CD4-positive, alpha-beta T cell (primary cell): ENCODE measurements at regions of chr3 and their contacts with region 1.

Region 1: DNA sequence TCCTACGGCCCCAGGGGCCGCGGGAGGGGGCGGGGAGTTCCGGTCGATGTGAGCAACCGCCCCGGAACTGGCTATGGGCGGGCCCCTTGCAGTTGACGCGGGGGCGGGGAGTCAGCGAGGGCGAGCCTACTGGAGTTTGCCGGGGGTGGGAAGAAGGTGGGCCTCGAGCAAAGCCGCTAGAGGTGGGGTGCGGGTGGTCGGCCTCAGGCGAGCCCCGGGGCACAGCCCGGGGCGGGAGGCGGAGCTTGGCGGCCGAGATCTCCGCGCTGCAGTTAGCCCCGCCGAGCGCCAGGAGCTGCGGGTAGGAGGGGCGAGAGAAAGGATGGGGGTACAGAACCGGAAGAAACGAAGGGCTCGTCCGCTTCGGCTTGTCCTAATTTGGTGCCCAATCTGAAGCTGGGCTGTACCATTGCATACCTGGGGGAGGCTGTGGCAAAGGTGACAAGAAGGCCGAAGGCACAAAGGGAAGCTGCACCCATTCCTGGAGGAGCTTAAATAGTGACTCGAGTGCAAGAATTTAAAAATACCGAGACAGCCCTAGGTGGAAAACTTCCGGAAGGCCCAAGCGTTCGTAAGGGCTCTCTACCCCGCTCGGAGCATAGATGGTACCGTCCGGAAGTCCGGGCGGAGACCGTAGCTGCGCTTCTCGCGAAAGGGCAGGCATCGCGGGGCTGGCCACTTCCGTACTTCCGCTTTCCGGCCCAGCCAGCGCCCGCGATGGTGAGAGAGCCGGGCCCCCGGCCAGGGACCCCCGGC is at the starts of genes ARPC4 and TADA3:
- DNase-seq: peak; percentile 82 to 96 (median 88)
- ATAC-seq: peak; percentile 85
- H3K4me3 ChIP-seq: peak within 1 kb of the TSS; percentile 99
- H3K4me3 Mint-ChIP-seq: peak within 1 kb of the TSS; percentile 99
- H3K27ac ChIP-seq: peak within 1 kb of the TSS; percentile 95 to 98
- H3K27ac Mint-ChIP-seq: peak within 1 kb of the TSS; percentile 99
- H3K4me1 ChIP-seq: peaks cover 64% of the 10 kb centered on the region
- H3K4me1 Mint-ChIP-seq: peaks cover 76% of the 10 kb centered on the region
- H3K27me3 ChIP-seq: no peaks in the 10 kb centered on the region
- H3K27me3 Mint-ChIP-seq: no peaks in the 10 kb centered on the region
- CTCF ChIP-seq: no peak
- total RNA-seq, gene ARPC4: 88.7 to 91.3 TPM
- total RNA-seq, gene TADA3: 14.7 to 16.5 TPM

Region 2: DNA sequence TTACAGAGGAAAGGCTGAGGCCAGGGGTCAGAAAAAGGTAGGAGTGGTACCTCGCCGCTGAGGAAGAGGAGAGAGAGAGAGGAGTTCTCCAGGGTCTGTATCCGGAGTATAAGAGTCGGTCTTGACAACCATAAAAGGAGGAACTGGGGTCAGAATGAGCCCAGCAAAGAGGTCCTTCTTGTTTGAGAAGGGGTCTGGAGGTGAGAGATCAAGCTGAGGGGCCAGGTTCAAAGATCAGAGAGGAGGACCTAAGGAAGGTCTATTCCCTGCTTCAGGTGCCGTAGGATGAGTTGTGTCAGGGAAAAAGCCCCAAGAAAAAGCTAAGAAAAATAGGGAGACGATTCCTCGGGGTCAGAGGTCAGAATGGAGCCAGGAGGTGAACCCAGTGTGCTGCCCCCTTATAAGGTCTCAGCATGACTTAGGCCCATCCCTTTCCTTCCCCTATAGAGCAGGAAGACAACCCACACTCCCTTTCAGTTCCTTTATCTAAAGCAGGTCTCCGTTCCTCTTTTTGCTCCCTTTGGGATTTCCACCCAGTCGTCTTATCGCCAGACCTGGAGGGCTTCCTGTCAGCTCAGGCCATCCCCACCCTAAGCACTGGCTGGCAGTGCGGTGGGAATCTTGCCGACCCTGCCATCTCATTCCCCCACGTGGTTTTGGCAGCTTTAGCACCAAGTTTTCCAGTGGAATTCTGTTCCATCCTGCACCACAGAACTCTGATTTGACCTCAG is 142.6 kb before region 1 on chr3:
- CTCF ChIA-PET with region 1: no interaction called
- POLR2A ChIA-PET with region 1: interaction called, 23 read pairs
- intact Hi-C with region 1: loop called (anchors 1 to 2 kb)
- DNase-seq: peak in 3 of 14 experiments; percentile 40 to 57 (median 53)
- ATAC-seq: no peak
- H3K4me3 ChIP-seq: peak overlapping the region; percentile 92
- H3K4me3 Mint-ChIP-seq: peak overlapping the region; percentile 96
- H3K27ac ChIP-seq: peak overlapping the region; percentile 78 to 92
- H3K27ac Mint-ChIP-seq: peak overlapping the region; percentile 87
- H3K4me1 ChIP-seq: peaks cover 36% of the 10 kb centered on the region
- H3K4me1 Mint-ChIP-seq: peaks cover 35% of the 10 kb centered on the region
- H3K27me3 ChIP-seq: no peaks in the 10 kb centered on the region
- H3K27me3 Mint-ChIP-seq: no peaks in the 10 kb centered on the region
- CTCF ChIP-seq: no peak

Region 3: GRCh38 chr3:9769426-9770275 is 22.9 kb before region 1 on chr3 and contains the start of gene CAMK1:
- CTCF ChIA-PET with region 1: no interaction called
- POLR2A ChIA-PET with region 1: interaction called, 11 read pairs
- intact Hi-C with region 1: no loop called
- DNase-seq: peak; percentile 28 to 71 (median 48)
- ATAC-seq: peak; percentile 97
- H3K4me3 ChIP-seq: peak within 1 kb of the TSS; percentile 53
- H3K4me3 Mint-ChIP-seq: peak within 1 kb of the TSS; percentile 35
- H3K27ac ChIP-seq: no peak within 1 kb of the TSS
- H3K27ac Mint-ChIP-seq: peak within 1 kb of the TSS; percentile 16
- H3K4me1 ChIP-seq: peaks cover 29% of the 10 kb centered on the region
- H3K4me1 Mint-ChIP-seq: peaks cover 18% of the 10 kb centered on the region
- H3K27me3 ChIP-seq: no peaks in the 10 kb centered on the region
- H3K27me3 Mint-ChIP-seq: no peaks in the 10 kb centered on the region
- CTCF ChIP-seq: no peak
- total RNA-seq, gene CAMK1: 0.74 to 1.1 TPM

Region 4: GRCh38 chr3:9809615-9810432 is 17.2 kb after region 1 on chr3 and contains the start of gene TTLL3:
- CTCF ChIA-PET with region 1: interaction called, 8 read pairs
- POLR2A ChIA-PET with region 1: interaction called, 64 read pairs
- intact Hi-C with region 1: loop called (anchors 1 to 2 kb)
- DNase-seq: peak; percentile 22 to 72 (median 38)
- ATAC-seq: peak; percentile 66
- H3K4me3 ChIP-seq: peak within 1 kb of the TSS; percentile 68
- H3K4me3 Mint-ChIP-seq: peak within 1 kb of the TSS; percentile 88
- H3K27ac ChIP-seq: peak within 1 kb of the TSS; percentile 70 to 85
- H3K27ac Mint-ChIP-seq: peak within 1 kb of the TSS; percentile 83
- H3K4me1 ChIP-seq: peaks cover 35% of the 10 kb centered on the region
- H3K4me1 Mint-ChIP-seq: peaks cover 40% of the 10 kb centered on the region
- H3K27me3 ChIP-seq: no peaks in the 10 kb centered on the region
- H3K27me3 Mint-ChIP-seq: no peaks in the 10 kb centered on the region
- CTCF ChIP-seq: no peak
- total RNA-seq, gene TTLL3: 50.5 to 58.6 TPM

Region 5: DNA sequence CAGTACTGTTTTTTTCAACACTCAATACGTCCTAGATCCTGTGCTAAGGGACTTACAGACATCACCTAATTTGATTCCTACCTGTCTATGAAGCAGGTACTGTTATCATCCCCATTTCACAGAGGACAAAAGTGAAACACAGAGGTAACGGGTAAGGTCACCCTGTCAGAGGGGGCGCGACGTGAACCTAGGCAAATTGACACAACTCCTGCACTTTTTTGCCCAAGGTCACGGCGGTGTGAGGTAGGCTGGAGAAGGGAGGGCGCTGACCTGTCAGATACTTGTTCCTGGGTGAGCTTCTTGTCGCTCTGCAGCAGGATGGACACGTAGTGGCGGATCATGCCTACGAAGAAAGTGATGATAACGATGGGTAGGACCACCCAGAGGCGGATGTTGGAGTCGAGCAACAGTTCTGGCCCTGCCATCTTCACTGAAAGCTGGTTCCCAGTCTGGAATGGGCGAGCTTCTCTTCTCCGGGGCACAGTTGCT is 193.7 kb after region 1 on chr3:
- CTCF ChIA-PET with region 1: no interaction called
- POLR2A ChIA-PET with region 1: interaction called, 10 read pairs
- intact Hi-C with region 1: loop called in 1 of 2 experiments (anchors 5 kb)
- DNase-seq: no peak
- ATAC-seq: peak; percentile 44
- H3K4me3 ChIP-seq: peak overlapping the region; percentile 99
- H3K4me3 Mint-ChIP-seq: peak overlapping the region; percentile 96
- H3K27ac ChIP-seq: peak overlapping the region; percentile 75 to 94
- H3K27ac Mint-ChIP-seq: peak overlapping the region; percentile 98
- H3K4me1 ChIP-seq: peaks cover 27% of the 10 kb centered on the region
- H3K4me1 Mint-ChIP-seq: peaks cover 27% of the 10 kb centered on the region
- H3K27me3 ChIP-seq: no peaks in the 10 kb centered on the region
- H3K27me3 Mint-ChIP-seq: no peaks in the 10 kb centered on the region
- CTCF ChIP-seq: no peak

Region 6: DNA sequence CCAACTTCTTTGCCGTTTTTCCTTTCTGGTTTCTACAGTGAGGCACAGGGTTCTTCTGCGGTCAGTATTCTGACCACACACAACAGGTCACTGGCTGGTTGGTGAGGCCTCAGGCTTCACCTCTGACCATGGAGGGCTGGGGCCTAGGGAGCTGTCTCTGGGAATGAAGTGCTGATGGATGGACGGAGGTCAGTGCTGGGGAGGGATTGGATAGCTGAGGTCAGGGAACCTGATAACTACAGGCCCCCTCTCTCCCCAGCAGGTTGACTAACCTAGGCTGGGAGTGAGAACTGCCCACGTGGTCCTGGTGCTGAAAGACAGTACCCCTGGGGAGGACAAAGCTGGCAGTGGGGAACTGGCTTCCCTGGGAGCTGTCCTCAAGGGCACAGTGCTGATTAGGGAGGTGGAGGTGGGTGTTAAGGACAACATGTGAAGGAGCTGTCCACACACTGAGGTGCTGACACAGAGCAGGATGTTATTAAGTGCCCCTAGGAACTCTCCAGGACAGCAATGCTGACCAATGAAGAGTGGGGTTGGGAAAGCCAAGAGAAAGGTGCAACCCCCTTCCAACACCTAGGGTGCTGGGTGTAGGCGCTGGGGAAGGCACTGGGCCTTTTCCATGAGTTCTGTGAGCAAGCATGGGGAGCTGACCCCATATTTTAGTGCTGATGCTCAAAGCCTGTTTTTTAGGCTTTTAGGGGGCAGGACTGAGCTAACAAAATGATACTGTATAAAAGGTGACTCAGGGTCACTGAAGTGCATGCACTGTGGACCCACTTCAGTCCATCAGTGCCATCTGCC is 667.6 kb after region 1 on chr3:
- CTCF ChIA-PET with region 1: no interaction called
- POLR2A ChIA-PET with region 1: no interaction called
- intact Hi-C with region 1: no loop called
- DNase-seq: peak in 12 of 14 experiments; percentile 11 to 76 (median 36)
- ATAC-seq: peak; percentile 97
- H3K4me3 ChIP-seq: no peak overlapping the region
- H3K4me3 Mint-ChIP-seq: no peak overlapping the region
- H3K27ac ChIP-seq: no peak overlapping the region
- H3K27ac Mint-ChIP-seq: no peak overlapping the region
- H3K4me1 ChIP-seq: no peaks in the 10 kb centered on the region
- H3K4me1 Mint-ChIP-seq: no peaks in the 10 kb centered on the region
- H3K27me3 ChIP-seq: no peaks in the 10 kb centered on the region
- H3K27me3 Mint-ChIP-seq: peaks cover 3% of the 10 kb centered on the region
- CTCF ChIP-seq: no peak